ENCODE measurements at regions of chrX and their contacts with region 1.

Region 1: DNA sequence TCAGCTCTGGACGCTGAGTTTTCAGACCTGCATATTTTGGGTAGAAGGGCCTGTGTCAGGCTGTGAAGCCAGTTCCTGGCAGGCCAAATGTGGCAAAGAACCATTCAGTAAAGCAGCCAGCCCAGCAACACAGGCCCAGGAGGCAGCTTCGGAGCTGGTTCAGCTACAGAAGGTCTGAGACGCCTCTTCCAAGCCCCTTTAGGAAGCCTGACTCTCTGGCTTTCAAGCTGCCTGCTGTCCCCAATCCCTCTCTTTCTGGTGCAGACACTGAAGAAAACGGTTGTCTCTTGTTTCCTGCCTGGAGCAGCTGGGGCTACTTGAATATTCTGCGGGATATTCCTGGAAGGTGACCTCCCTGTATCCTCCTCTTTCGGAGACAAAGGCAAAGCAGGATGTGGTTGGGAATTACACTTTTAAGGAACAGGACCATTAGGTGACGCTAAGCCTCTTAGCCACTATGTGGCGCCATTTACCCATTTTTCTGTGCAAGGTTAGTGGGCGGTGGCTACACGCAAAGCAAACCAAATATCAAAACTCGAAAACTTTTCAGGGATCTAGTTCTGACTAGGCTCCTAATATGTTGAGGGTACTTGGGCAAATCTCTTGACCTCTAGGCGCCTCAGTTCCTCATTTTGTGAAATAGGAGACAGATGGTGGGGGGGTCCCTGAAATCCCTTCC is 47.2 kb upstream of the LAS1L start:
- DNase-seq: peak; percentile 48
- ATAC-seq: peak; percentile 91
- H3K4me3 ChIP-seq: no peak overlapping the region
- H3K27ac ChIP-seq: no peak overlapping the region
- H3K4me1 ChIP-seq: peaks cover 0 to 5% of the 10 kb centered on the region in 2 experiments; a peak in 1 of 4 replicates
- H3K27me3 ChIP-seq: no peaks in the 10 kb centered on the region
- CTCF ChIP-seq: peak; percentile 57 to 75 (median 62); a peak in 5 of 6 replicates
- POLR2A ChIP-seq: no peak
- RAD21 ChIP-seq: peak; percentile 83

Region 2: GRCh38 chrX:65828599-65828998 is 246.8 kb after region 1 on chrX:
- CTCF ChIA-PET with region 1: no interaction called
- POLR2A ChIA-PET with region 1: no interaction called
- RAD21 ChIA-PET with region 1: no interaction called
- intact Hi-C with region 1: no loop called
- DNase-seq: no peak
- ATAC-seq: no peak
- H3K4me3 ChIP-seq: no peak overlapping the region
- H3K27ac ChIP-seq: no peak overlapping the region
- H3K4me1 ChIP-seq: no peaks in the 10 kb centered on the region
- H3K27me3 ChIP-seq: no peaks in the 10 kb centered on the region
- CTCF ChIP-seq: no peak
- POLR2A ChIP-seq: no peak
- RAD21 ChIP-seq: no peak

Region 3: DNA sequence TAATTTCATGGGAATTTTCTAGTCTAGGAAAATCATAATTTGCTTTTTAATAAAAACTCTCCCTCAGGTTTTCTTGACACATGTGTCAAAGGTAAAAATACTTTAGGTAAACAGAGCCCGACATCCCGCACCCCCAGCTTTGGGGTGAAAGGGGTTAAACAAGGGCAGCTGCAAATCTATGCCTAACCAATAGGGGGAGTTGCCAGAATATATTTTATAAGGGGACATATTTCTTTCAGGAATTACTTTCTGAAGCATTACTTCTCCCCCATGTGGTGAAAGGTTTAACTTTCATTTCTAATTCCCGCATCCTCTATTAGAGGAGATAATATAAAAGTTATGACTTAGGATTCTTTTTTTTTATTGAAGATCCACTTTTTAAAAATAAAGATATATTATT is 528.3 kb after region 1 on chrX:
- CTCF ChIA-PET with region 1: interaction called, 4 read pairs
- POLR2A ChIA-PET with region 1: no interaction called
- RAD21 ChIA-PET with region 1: no interaction called
- intact Hi-C with region 1: loop called (anchors 5 kb)
- DNase-seq: peak; percentile 3
- ATAC-seq: peak; percentile 57; the same call in 1 of the 2 replicates
- H3K4me3 ChIP-seq: no peak overlapping the region
- H3K27ac ChIP-seq: no peak overlapping the region
- H3K4me1 ChIP-seq: no peaks in the 10 kb centered on the region
- H3K27me3 ChIP-seq: no peaks in the 10 kb centered on the region
- CTCF ChIP-seq: peak; percentile 54 to 95 (median 62)
- POLR2A ChIP-seq: no peak
- RAD21 ChIP-seq: peak; percentile 51; the same call in 1 of the 2 replicates

Region 4: GRCh38 chrX:66731398-66731797 is 1149.6 kb after region 1 on chrX:
- CTCF ChIA-PET with region 1: no interaction called
- POLR2A ChIA-PET with region 1: no interaction called
- RAD21 ChIA-PET with region 1: no interaction called
- intact Hi-C with region 1: loop called (anchors 10 kb)
- DNase-seq: no peak
- ATAC-seq: no peak
- H3K4me3 ChIP-seq: no peak overlapping the region
- H3K27ac ChIP-seq: no peak overlapping the region
- H3K4me1 ChIP-seq: no peaks in the 10 kb centered on the region
- H3K27me3 ChIP-seq: no peaks in the 10 kb centered on the region
- CTCF ChIP-seq: peak in 1 of 3 experiments; percentile 20; a peak in 1 of 6 replicates
- POLR2A ChIP-seq: no peak
- RAD21 ChIP-seq: 0 out of 2 replicates have a peak, but pooled peaks have one; percentile 12